ENCODE measurements at regions of chr11 and their contacts with region 1.

Region 1: GRCh38 chr11:124837491-124837856 is 27.8 kb upstream of the ROBO3 start:
- DNase-seq: no peak
- ATAC-seq: peak; percentile 82
- H3K4me3 ChIP-seq: no peak overlapping the region
- H3K27ac ChIP-seq: no peak overlapping the region
- H3K4me1 ChIP-seq: no peaks in the 10 kb centered on the region
- H3K27me3 ChIP-seq: peaks cover 0 to 3% of the 10 kb centered on the region in 2 donors

Region 2: GRCh38 chr11:123547180-123547579 is 1290.3 kb before region 1 on chr11:
- intact Hi-C with region 1: no loop called
- DNase-seq: no peak
- ATAC-seq: no peak
- H3K4me3 ChIP-seq: no peak overlapping the region
- H3K27ac ChIP-seq: no peak overlapping the region
- H3K4me1 ChIP-seq: no peaks in the 10 kb centered on the region
- H3K27me3 ChIP-seq: no peaks in the 10 kb centered on the region

Region 3: DNA sequence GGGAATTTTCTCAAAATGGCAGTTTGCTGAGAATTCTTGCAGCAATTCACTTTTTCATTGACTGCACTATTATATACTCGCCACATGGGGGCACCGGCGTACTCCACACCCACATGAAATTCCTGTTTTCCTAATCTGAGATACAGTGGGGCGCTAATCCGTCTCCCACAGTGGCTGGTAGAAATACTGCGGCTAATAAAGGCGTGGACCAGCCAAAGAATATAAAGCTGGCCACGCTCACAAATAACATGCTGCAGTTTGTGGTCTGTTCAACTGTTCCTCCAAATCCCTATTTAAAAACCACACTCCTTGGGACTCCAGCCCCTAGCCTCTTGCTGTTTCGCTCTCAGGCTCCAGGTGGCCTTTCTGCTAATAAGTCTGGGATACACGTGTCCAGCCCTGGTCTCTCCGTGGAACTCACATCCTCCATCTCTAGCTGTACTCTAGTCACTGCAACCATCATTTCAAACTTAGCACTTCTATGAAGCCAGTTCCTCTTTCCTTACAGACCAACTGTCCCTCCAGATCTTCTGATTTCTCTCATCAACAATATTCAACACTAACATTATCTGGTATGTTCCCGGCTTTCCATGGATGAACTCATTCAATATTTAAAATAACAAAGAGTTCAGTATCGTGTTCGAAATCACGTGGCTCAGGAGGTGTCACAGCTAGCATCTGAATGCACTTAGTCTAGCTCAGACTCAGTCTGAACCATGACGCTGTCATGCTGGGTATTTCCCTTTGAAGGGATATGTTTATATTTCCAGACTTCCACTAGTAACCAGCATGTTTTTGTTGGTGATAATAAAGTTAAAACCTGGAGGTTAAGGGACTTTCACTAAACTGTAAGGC is 192.8 kb before region 1 on chr11:
- intact Hi-C with region 1: loop called (anchors 2 to 5 kb)
- DNase-seq: peak; percentile 53 to 79
- ATAC-seq: peak; percentile 94
- H3K4me3 ChIP-seq: peak overlapping the region in 1 of 2 donors; percentile 58
- H3K27ac ChIP-seq: peak overlapping the region in 1 of 2 donors; percentile 79
- H3K4me1 ChIP-seq: peaks cover 0 to 1% of the 10 kb centered on the region in 2 donors
- H3K27me3 ChIP-seq: no peaks in the 10 kb centered on the region

Region 4: GRCh38 chr11:124763156-124763947 is 74.1 kb before region 1 on chr11:
- intact Hi-C with region 1: loop called (anchors 5 to 10 kb)
- DNase-seq: peak; percentile 89 to 97
- ATAC-seq: peak; percentile 38
- H3K4me3 ChIP-seq: peak overlapping the region; percentile 57 to 68
- H3K27ac ChIP-seq: peak overlapping the region in 1 of 2 donors; percentile 66
- H3K4me1 ChIP-seq: no peaks in the 10 kb centered on the region
- H3K27me3 ChIP-seq: no peaks in the 10 kb centered on the region

Region 5: GRCh38 chr11:124778281-124778680 is 59.2 kb before region 1 on chr11:
- intact Hi-C with region 1: no loop called
- DNase-seq: no peak
- ATAC-seq: no peak
- H3K4me3 ChIP-seq: no peak overlapping the region
- H3K27ac ChIP-seq: peak overlapping the region; percentile 36 to 96
- H3K4me1 ChIP-seq: peaks cover 0 to 11% of the 10 kb centered on the region in 2 donors
- H3K27me3 ChIP-seq: no peaks in the 10 kb centered on the region

Region 6: DNA sequence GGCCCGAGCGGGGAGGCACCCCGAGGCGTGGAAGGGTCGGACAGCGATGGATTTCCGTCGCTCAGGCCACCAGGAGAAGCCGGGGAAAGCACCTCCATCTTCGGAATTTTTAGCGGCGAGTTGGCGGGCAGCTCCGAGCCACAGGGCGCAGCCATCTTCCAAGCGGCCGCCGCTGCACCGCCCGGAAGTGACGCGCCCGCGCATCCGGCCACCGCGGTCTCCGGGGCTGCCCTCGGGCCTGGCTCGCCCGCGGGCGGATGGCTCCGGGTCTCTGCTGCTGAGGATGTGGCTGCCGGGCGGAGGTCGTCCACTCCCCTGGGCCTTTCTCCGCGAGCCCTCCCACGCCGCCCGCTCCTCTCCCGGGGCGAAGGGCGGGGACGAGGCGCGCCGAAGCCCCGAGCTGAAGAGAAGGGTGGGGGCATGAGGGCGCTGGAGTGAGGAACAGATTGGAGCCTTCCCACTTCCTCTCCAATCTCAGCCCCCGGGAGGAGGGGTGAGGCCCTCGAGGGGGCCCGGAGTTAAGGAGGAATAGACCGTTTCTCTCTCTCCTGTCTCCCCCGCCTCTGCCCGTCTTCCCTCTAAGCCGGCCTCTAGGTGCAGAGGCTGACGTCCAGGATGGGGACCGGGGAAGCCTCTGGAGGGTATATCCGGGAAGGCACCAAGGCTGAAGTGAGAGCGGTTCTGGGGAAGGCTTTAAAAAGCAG is 37.1 kb before region 1 on chr11 and contains the start of gene MSANTD2:
- intact Hi-C with region 1: loop called (anchors 5 kb)
- DNase-seq: peak; percentile 90 to 94
- ATAC-seq: peak; percentile 97
- H3K4me3 ChIP-seq: peak within 1 kb of the TSS; percentile 95 to 97
- H3K27ac ChIP-seq: peak within 1 kb of the TSS; percentile 77 to 99
- H3K4me1 ChIP-seq: peaks cover 1 to 6% of the 10 kb centered on the region in 2 donors
- H3K27me3 ChIP-seq: no peaks in the 10 kb centered on the region
- total RNA-seq, gene MSANTD2: 21.5 to 23.6 TPM

Measured in aorta (tissue), 5 donors.